CD8-positive, alpha-beta T cell (primary cell): ENCODE measurements at regions of chr7 and their contacts with region 1.

Region 1: DNA sequence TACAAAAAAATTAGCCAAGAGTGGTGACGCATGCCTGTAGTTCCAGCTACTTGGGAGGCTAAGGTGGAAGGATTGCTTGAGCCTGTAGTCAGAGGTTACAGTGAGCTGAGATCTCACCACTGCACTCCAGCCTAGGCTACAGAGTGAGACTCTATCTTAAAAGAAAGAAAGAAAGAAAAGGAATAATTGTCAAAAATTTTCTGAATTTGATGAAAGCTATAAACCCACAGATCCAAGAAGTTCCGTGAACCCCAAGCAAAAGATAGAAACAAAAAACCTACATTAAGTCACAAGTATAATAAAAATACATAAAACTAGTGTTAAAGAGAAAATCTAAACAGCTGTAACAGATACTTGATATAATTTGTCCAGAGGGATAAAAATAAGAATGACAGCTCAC is 60.1 kb upstream of the KMT2C start:
- DNase-seq: no peak
- ATAC-seq: no peak
- H3K4me3 ChIP-seq: no peak overlapping the region
- H3K4me3 Mint-ChIP-seq: no peak overlapping the region
- H3K27ac ChIP-seq: no peak overlapping the region
- H3K27ac Mint-ChIP-seq: no peak overlapping the region
- H3K4me1 ChIP-seq: no peaks in the 10 kb centered on the region
- H3K4me1 Mint-ChIP-seq: no peaks in the 10 kb centered on the region
- H3K27me3 ChIP-seq: no peaks in the 10 kb centered on the region
- H3K27me3 Mint-ChIP-seq: no peaks in the 10 kb centered on the region
- CTCF ChIP-seq: no peak

Region 2: GRCh38 chr7:152476551-152476950 is 19.3 kb before region 1 on chr7:
- CTCF ChIA-PET with region 1: no interaction called
- POLR2A ChIA-PET with region 1: interaction called, 3 read pairs
- intact Hi-C with region 1: loop called in 1 of 2 experiments (anchors 2 kb)
- DNase-seq: no peak
- ATAC-seq: no peak
- H3K4me3 ChIP-seq: no peak overlapping the region
- H3K4me3 Mint-ChIP-seq: no peak overlapping the region
- H3K27ac ChIP-seq: no peak overlapping the region
- H3K27ac Mint-ChIP-seq: no peak overlapping the region
- H3K4me1 ChIP-seq: no peaks in the 10 kb centered on the region
- H3K4me1 Mint-ChIP-seq: no peaks in the 10 kb centered on the region
- H3K27me3 ChIP-seq: no peaks in the 10 kb centered on the region
- H3K27me3 Mint-ChIP-seq: no peaks in the 10 kb centered on the region
- CTCF ChIP-seq: no peak